T-cell (primary cell): ENCODE measurements at regions of chr1 and their contacts with region 1.

Region 1: DNA sequence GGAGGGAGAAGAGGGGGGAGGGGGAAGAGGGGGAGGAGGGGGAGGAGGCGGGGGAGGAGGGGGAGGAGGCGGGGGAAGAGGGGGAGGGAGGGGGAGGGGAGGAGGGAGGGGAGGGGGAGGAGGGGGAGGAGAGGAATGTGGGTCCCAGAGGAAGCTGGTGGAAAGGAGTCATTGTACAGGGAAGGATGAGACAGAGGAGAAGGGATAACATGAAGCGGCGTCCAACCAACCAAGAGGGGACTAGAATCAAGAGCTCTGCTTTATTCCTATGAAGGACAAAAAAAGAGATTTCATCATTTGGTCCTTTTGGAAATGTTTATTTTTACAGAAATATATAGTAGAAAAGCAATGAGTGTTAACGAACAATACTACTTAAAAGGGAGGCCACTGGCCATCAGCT is 24.5 kb downstream of the COA6 start:
- DNase-seq: no peak
- ATAC-seq: no peak
- H3K4me3 ChIP-seq: no peak overlapping the region
- H3K4me3 Mint-ChIP-seq: no peak overlapping the region
- H3K27ac ChIP-seq: no peak overlapping the region
- H3K27ac Mint-ChIP-seq: no peak overlapping the region
- H3K4me1 ChIP-seq: peaks cover 16 to 23% of the 10 kb centered on the region in 2 experiments
- H3K4me1 Mint-ChIP-seq: peaks cover 42 to 61% (median 47%) of the 10 kb centered on the region in 3 donors
- H3K27me3 ChIP-seq: no peaks in the 10 kb centered on the region
- H3K27me3 Mint-ChIP-seq: no peaks in the 10 kb centered on the region

Region 2: GRCh38 chr1:233815865-233816264 is 581.9 kb before region 1 on chr1:
- CTCF ChIA-PET with region 1: no interaction called
- POLR2A ChIA-PET with region 1: no interaction called
- DNase-seq: no peak
- ATAC-seq: no peak
- H3K4me3 ChIP-seq: no peak overlapping the region
- H3K4me3 Mint-ChIP-seq: no peak overlapping the region
- H3K27ac ChIP-seq: no peak overlapping the region
- H3K27ac Mint-ChIP-seq: no peak overlapping the region
- H3K4me1 ChIP-seq: no peaks in the 10 kb centered on the region
- H3K4me1 Mint-ChIP-seq: no peaks in the 10 kb centered on the region
- H3K27me3 ChIP-seq: peaks cover 0 to 7% of the 10 kb centered on the region in 2 experiments
- H3K27me3 Mint-ChIP-seq: peaks cover 17 to 36% of the 10 kb centered on the region in 2 donors

Region 3: GRCh38 chr1:234373959-234374254 is 23.8 kb before region 1 on chr1:
- CTCF ChIA-PET with region 1: interaction called, 7 to 10 read pairs
- POLR2A ChIA-PET with region 1: interaction called in 1 of 2 experiments, 4 read pairs
- DNase-seq: no peak
- ATAC-seq: peak in 2 of 4 experiments; percentile 26 to 35
- H3K4me3 ChIP-seq: peak overlapping the region; percentile 83 to 97
- H3K4me3 Mint-ChIP-seq: peak overlapping the region; percentile 92 to 96 (median 96)
- H3K27ac ChIP-seq: peak overlapping the region; percentile 94
- H3K27ac Mint-ChIP-seq: peak overlapping the region; percentile 98 to 100
- H3K4me1 ChIP-seq: peaks cover 13 to 31% of the 10 kb centered on the region in 2 experiments
- H3K4me1 Mint-ChIP-seq: peaks cover 50 to 66% (median 55%) of the 10 kb centered on the region in 3 donors
- H3K27me3 ChIP-seq: no peaks in the 10 kb centered on the region
- H3K27me3 Mint-ChIP-seq: no peaks in the 10 kb centered on the region

Region 4: GRCh38 chr1:234499119-234499942 is 101.6 kb after region 1 on chr1:
- CTCF ChIA-PET with region 1: no interaction called
- POLR2A ChIA-PET with region 1: no interaction called
- DNase-seq: peak; percentile 41 to 86 (median 74)
- ATAC-seq: peak; percentile 95 to 99 (median 96)
- H3K4me3 ChIP-seq: no peak overlapping the region
- H3K4me3 Mint-ChIP-seq: no peak overlapping the region
- H3K27ac ChIP-seq: no peak overlapping the region
- H3K27ac Mint-ChIP-seq: no peak overlapping the region
- H3K4me1 ChIP-seq: peaks cover 0 to 6% of the 10 kb centered on the region in 2 experiments
- H3K4me1 Mint-ChIP-seq: peaks cover 7 to 11% (median 11%) of the 10 kb centered on the region in 3 donors
- H3K27me3 ChIP-seq: peaks cover 0 to 7% of the 10 kb centered on the region in 2 experiments
- H3K27me3 Mint-ChIP-seq: peaks cover 0 to 2% of the 10 kb centered on the region in 2 donors

Region 5: GRCh38 chr1:234709473-234710228 is 311.9 kb after region 1 on chr1:
- CTCF ChIA-PET with region 1: no interaction called
- POLR2A ChIA-PET with region 1: no interaction called
- DNase-seq: no peak
- ATAC-seq: peak in 1 of 4 experiments; percentile 27
- H3K4me3 ChIP-seq: no peak overlapping the region
- H3K4me3 Mint-ChIP-seq: no peak overlapping the region
- H3K27ac ChIP-seq: no peak overlapping the region
- H3K27ac Mint-ChIP-seq: no peak overlapping the region
- H3K4me1 ChIP-seq: peaks cover 2% of the 10 kb centered on the region in 2 experiments
- H3K4me1 Mint-ChIP-seq: peaks cover 12 to 18% (median 18%) of the 10 kb centered on the region in 3 donors
- H3K27me3 ChIP-seq: no peaks in the 10 kb centered on the region
- H3K27me3 Mint-ChIP-seq: no peaks in the 10 kb centered on the region